CD4-positive, alpha-beta memory T cell (primary cell): ENCODE measurements at regions of chr13 and their contacts with region 1.

Region 1: GRCh38 chr13:32538621-32539246 is at the start of gene N4BP2L2:
- DNase-seq: peak; percentile 89 to 95 (median 91)
- H3K4me3 ChIP-seq: peak within 1 kb of the TSS; percentile 87 to 100
- H3K4me3 Mint-ChIP-seq: peak within 1 kb of the TSS; percentile 95 to 100 (median 99)
- H3K27ac ChIP-seq: peak within 1 kb of the TSS; percentile 99
- H3K27ac Mint-ChIP-seq: peak within 1 kb of the TSS; percentile 99 to 100 (median 100)
- H3K4me1 ChIP-seq: peaks cover 39% of the 10 kb centered on the region
- H3K4me1 Mint-ChIP-seq: peaks cover 32 to 57% (median 44%) of the 10 kb centered on the region in 4 donors
- H3K27me3 ChIP-seq: no peaks in the 10 kb centered on the region
- H3K27me3 Mint-ChIP-seq: no peaks in the 10 kb centered on the region
- total RNA-seq, gene N4BP2L2: 337 to 351 TPM

Region 2: GRCh38 chr13:31199849-31200636 is 1338.7 kb before region 1 on chr13 and contains the start of gene B3GLCT:
- CTCF ChIA-PET with region 1: no interaction called
- POLR2A ChIA-PET with region 1: interaction called, 4 read pairs
- intact Hi-C with region 1: loop called (anchors 10 kb)
- DNase-seq: peak; percentile 74 to 86 (median 84)
- H3K4me3 ChIP-seq: peak within 1 kb of the TSS; percentile 19 to 60
- H3K4me3 Mint-ChIP-seq: peak within 1 kb of the TSS; percentile 83 to 90 (median 88)
- H3K27ac ChIP-seq: peak within 1 kb of the TSS; percentile 83
- H3K27ac Mint-ChIP-seq: peak within 1 kb of the TSS; percentile 90 to 96 (median 91)
- H3K4me1 ChIP-seq: peaks cover 13% of the 10 kb centered on the region
- H3K4me1 Mint-ChIP-seq: peaks cover 19 to 23% (median 22%) of the 10 kb centered on the region in 4 donors
- H3K27me3 ChIP-seq: no peaks in the 10 kb centered on the region
- H3K27me3 Mint-ChIP-seq: no peaks in the 10 kb centered on the region
- total RNA-seq, gene B3GLCT: 5.2 to 5.8 TPM

Region 3: GRCh38 chr13:32315238-32316027 is 223.3 kb before region 1 on chr13 and contains the starts of genes BRCA2 and ZAR1L:
- CTCF ChIA-PET with region 1: no interaction called
- POLR2A ChIA-PET with region 1: interaction called, 15 read pairs
- intact Hi-C with region 1: loop called (anchors 1 kb)
- DNase-seq: peak; percentile 85 to 89 (median 87)
- H3K4me3 ChIP-seq: peak within 1 kb of the TSS; percentile 59 to 81
- H3K4me3 Mint-ChIP-seq: peak within 1 kb of the TSS; percentile 91 to 100 (median 96)
- H3K27ac ChIP-seq: peak within 1 kb of the TSS; percentile 99
- H3K27ac Mint-ChIP-seq: peak within 1 kb of the TSS; percentile 98 to 100 (median 100)
- H3K4me1 ChIP-seq: peaks cover 16% of the 10 kb centered on the region
- H3K4me1 Mint-ChIP-seq: peaks cover 7 to 27% (median 11%) of the 10 kb centered on the region in 4 donors
- H3K27me3 ChIP-seq: no peaks in the 10 kb centered on the region
- H3K27me3 Mint-ChIP-seq: no peaks in the 10 kb centered on the region
- total RNA-seq, gene BRCA2: 3.2 TPM
- total RNA-seq, gene ZAR1L: not detected

Region 4: DNA sequence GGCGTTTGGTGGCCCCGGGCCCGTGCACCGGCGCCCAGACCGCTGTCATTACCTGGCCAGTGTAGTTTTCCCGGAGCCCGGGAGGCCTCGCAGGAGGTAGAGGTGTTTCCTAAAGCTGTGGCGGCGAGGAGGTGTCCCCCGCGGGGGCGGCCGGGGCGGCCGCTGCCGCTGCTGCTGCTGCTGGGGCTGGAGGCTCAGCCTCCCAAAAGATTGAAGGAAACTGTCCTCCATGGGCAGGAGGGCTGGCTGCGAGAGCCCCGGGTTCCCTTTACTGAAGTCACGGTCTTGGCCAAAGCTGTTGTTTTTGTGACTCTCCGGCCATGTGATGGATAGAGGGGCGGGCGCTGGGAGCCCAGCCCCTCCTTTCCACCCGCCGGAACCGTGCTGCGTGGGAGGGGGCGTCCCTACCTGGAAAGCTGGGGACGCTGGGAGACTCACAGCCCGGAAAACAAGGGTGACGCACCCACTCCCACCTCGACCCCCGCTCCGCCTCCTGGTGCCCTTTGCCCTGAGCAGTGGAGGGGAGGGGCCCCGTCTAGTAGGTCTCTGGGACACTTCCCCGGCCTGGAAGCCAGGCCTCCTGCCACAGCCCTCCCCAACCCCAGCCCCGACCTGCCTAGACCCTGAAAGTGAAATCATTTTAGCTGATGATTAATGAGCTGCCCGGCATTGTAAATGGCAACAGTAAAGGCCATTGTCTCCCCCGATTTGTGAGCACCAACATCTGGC is 110.7 kb before region 1 on chr13 and contains the start of gene N4BP2L1:
- CTCF ChIA-PET with region 1: interaction called, 5 read pairs
- POLR2A ChIA-PET with region 1: interaction called, 35 read pairs
- intact Hi-C with region 1: loop called (anchors 1 kb)
- DNase-seq: peak; percentile 80 to 94 (median 82)
- H3K4me3 ChIP-seq: peak within 1 kb of the TSS; percentile 77 to 85
- H3K4me3 Mint-ChIP-seq: peak within 1 kb of the TSS; percentile 94 to 99 (median 96)
- H3K27ac ChIP-seq: peak within 1 kb of the TSS; percentile 84
- H3K27ac Mint-ChIP-seq: peak within 1 kb of the TSS; percentile 96 to 99 (median 98)
- H3K4me1 ChIP-seq: peaks cover 46% of the 10 kb centered on the region
- H3K4me1 Mint-ChIP-seq: peaks cover 27 to 54% (median 40%) of the 10 kb centered on the region in 4 donors
- H3K27me3 ChIP-seq: no peaks in the 10 kb centered on the region
- H3K27me3 Mint-ChIP-seq: no peaks in the 10 kb centered on the region
- total RNA-seq, gene N4BP2L1: 51.6 to 51.9 TPM

Region 5: GRCh38 chr13:32581177-32581786 is 42.5 kb after region 1 on chr13:
- CTCF ChIA-PET with region 1: interaction called, 17 read pairs
- POLR2A ChIA-PET with region 1: interaction called, 22 read pairs
- intact Hi-C with region 1: loop called (anchors 1 kb)
- DNase-seq: peak in 3 of 5 donors; percentile 19 to 33 (median 28)
- H3K4me3 ChIP-seq: no peak overlapping the region
- H3K4me3 Mint-ChIP-seq: no peak overlapping the region
- H3K27ac ChIP-seq: no peak overlapping the region
- H3K27ac Mint-ChIP-seq: no peak overlapping the region
- H3K4me1 ChIP-seq: peaks cover 8% of the 10 kb centered on the region
- H3K4me1 Mint-ChIP-seq: peaks cover 1 to 10% (median 7%) of the 10 kb centered on the region in 4 donors
- H3K27me3 ChIP-seq: no peaks in the 10 kb centered on the region
- H3K27me3 Mint-ChIP-seq: no peaks in the 10 kb centered on the region

Region 6: GRCh38 chr13:32639502-32640105 is 100.9 kb after region 1 on chr13:
- CTCF ChIA-PET with region 1: interaction called, 8 read pairs
- POLR2A ChIA-PET with region 1: no interaction called
- intact Hi-C with region 1: loop called (anchors 1 kb)
- DNase-seq: peak; percentile 46 to 59 (median 56)
- H3K4me3 ChIP-seq: no peak overlapping the region
- H3K4me3 Mint-ChIP-seq: no peak overlapping the region
- H3K27ac ChIP-seq: no peak overlapping the region
- H3K27ac Mint-ChIP-seq: no peak overlapping the region
- H3K4me1 ChIP-seq: peaks cover 7% of the 10 kb centered on the region
- H3K4me1 Mint-ChIP-seq: peaks cover 19 to 33% (median 28%) of the 10 kb centered on the region in 4 donors
- H3K27me3 ChIP-seq: no peaks in the 10 kb centered on the region
- H3K27me3 Mint-ChIP-seq: no peaks in the 10 kb centered on the region

Region 7: DNA sequence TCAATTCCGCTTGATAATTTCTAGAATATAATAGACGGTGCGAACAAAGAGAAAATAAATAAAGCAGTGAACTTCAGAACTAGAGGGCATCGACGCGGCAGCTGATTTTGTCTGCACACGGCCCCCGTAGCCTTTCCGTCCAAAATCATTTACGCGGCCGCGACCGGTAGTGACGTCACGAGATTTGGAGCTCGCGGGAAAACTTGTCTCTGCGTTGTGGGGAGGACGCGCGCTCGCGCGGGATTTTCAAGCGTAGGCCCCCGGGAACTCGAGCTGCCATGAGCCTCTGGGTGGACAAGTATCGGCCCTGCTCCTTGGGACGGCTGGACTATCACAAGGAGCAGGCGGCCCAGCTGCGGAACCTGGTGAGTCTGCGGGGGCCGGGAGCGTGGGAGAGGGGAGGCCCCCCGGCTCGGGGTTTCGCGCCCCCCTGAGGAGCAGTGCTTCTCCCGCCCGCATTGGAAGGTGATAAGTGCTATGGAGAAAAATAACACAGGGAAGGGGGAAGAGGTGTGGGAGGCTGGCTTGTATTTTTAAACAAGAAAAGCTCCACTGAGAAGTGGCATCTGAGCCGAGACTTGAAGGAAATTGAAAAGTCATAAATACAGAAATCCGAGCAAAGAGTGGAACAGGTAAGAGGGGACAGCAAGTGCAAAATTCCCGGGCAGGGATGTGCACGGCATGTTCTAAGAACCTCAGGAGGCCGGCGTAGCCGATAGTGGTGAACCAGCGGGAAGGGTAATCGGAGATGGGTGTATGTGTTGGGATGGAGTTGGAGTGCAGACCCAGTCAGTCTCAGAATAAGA is 1279.4 kb after region 1 on chr13 and contains the start of gene RFC3:
- CTCF ChIA-PET with region 1: no interaction called
- POLR2A ChIA-PET with region 1: no interaction called
- intact Hi-C with region 1: loop called (anchors 10 kb)
- DNase-seq: peak; percentile 88 to 91 (median 89)
- H3K4me3 ChIP-seq: peak within 1 kb of the TSS; percentile 53 to 95
- H3K4me3 Mint-ChIP-seq: peak within 1 kb of the TSS; percentile 89 to 97 (median 91)
- H3K27ac ChIP-seq: peak within 1 kb of the TSS; percentile 55
- H3K27ac Mint-ChIP-seq: peak within 1 kb of the TSS; percentile 90 to 98 (median 94)
- H3K4me1 ChIP-seq: peaks cover 14% of the 10 kb centered on the region
- H3K4me1 Mint-ChIP-seq: peaks cover 6 to 21% (median 12%) of the 10 kb centered on the region in 4 donors
- H3K27me3 ChIP-seq: no peaks in the 10 kb centered on the region
- H3K27me3 Mint-ChIP-seq: peaks cover 0 to 1% of the 10 kb centered on the region in 2 donors
- total RNA-seq, gene RFC3: 4.9 to 5.1 TPM